Ascending aorta (tissue), 2 donors: ENCODE measurements at regions of chr12 and their contacts with region 1.

Region 1: GRCh38 chr12:120495723-120496412 is at the start of gene DYNLL1:
- DNase-seq: peak; percentile 85 to 97
- H3K4me3 ChIP-seq: peak within 1 kb of the TSS; percentile 83 to 86
- H3K27ac ChIP-seq: peak within 1 kb of the TSS; percentile 82 to 86
- H3K4me1 ChIP-seq: peaks cover 6 to 9% of the 10 kb centered on the region in 2 donors
- H3K27me3 ChIP-seq: no peaks in the 10 kb centered on the region
- CTCF ChIP-seq: peak in 1 of 3 experiments; percentile 4
- total RNA-seq, gene DYNLL1: 216 TPM

Region 2: GRCh38 chr12:120012067-120012621 is 483.7 kb before region 1 on chr12:
- intact Hi-C with region 1: no loop called
- DNase-seq: no peak
- H3K4me3 ChIP-seq: no peak overlapping the region
- H3K27ac ChIP-seq: no peak overlapping the region
- H3K4me1 ChIP-seq: no peaks in the 10 kb centered on the region
- H3K27me3 ChIP-seq: no peaks in the 10 kb centered on the region
- CTCF ChIP-seq: no peak

Region 3: DNA sequence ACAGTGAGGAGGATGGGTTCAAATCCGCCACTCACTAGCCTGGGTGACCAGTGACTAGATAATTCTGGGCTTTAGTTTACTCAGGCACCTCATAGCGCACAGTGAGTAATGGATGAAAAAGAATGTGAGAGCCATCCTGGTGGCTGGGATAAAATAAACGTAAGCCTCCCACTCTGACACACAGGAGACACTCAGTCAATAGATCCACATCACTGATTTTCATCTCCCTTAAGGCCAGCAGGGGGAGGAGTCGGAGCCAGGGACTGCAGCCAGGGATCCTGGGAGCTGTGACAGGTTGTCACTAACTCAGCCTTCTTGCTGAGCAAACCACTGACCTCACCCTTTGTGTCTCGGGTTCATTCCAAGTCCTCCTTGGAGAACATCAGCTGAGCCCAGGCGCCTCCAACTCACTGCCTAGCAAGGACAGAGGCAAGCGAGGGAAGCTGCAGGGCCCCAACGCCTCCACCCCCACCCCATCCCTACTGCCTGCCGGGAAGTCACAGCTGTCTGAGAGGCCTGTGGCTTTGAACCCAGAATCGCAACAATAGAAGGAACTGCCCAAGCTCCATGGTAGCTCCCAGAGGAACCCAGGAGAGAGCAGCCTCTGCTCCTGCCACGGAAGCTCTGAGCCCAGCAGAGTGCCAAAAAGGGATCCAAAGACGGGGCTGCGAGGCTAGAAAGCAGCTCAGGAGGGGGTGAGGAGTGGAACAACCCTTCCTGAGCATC is 261.1 kb before region 1 on chr12:
- intact Hi-C with region 1: no loop called
- DNase-seq: peak; percentile 86 to 95
- H3K4me3 ChIP-seq: peak overlapping the region in 1 of 2 donors; percentile 12
- H3K27ac ChIP-seq: peak overlapping the region; percentile 89 to 90
- H3K4me1 ChIP-seq: peaks cover 57 to 92% of the 10 kb centered on the region in 2 donors
- H3K27me3 ChIP-seq: no peaks in the 10 kb centered on the region
- CTCF ChIP-seq: peak in 2 of 3 experiments; percentile 38 to 52

Region 4: GRCh38 chr12:120445911-120446843 is 49.7 kb before region 1 on chr12 and contains the starts of genes GATC and TRIAP1:
- intact Hi-C with region 1: loop called (anchors 1 kb)
- DNase-seq: peak in 1 of 2 donors; percentile 89
- H3K4me3 ChIP-seq: peak within 1 kb of the TSS; percentile 81 to 98
- H3K27ac ChIP-seq: peak within 1 kb of the TSS; percentile 90 to 92
- H3K4me1 ChIP-seq: peaks cover 3 to 8% of the 10 kb centered on the region in 2 donors
- H3K27me3 ChIP-seq: no peaks in the 10 kb centered on the region
- CTCF ChIP-seq: no peak
- total RNA-seq, gene GATC: 6.2 TPM
- total RNA-seq, gene TRIAP1: 12.1 TPM

Region 5: GRCh38 chr12:120469450-120470149 is 26.3 kb before region 1 on chr12 and contains the start of gene SRSF9:
- intact Hi-C with region 1: loop called (anchors 1 kb)
- DNase-seq: peak; percentile 85 to 98
- H3K4me3 ChIP-seq: peak within 1 kb of the TSS; percentile 97 to 99
- H3K27ac ChIP-seq: peak within 1 kb of the TSS; percentile 94
- H3K4me1 ChIP-seq: peaks cover 8 to 32% of the 10 kb centered on the region in 2 donors
- H3K27me3 ChIP-seq: no peaks in the 10 kb centered on the region
- CTCF ChIP-seq: peak; percentile 92 to 96 (median 93)
- total RNA-seq, gene SRSF9: 68.6 TPM

Region 6: DNA sequence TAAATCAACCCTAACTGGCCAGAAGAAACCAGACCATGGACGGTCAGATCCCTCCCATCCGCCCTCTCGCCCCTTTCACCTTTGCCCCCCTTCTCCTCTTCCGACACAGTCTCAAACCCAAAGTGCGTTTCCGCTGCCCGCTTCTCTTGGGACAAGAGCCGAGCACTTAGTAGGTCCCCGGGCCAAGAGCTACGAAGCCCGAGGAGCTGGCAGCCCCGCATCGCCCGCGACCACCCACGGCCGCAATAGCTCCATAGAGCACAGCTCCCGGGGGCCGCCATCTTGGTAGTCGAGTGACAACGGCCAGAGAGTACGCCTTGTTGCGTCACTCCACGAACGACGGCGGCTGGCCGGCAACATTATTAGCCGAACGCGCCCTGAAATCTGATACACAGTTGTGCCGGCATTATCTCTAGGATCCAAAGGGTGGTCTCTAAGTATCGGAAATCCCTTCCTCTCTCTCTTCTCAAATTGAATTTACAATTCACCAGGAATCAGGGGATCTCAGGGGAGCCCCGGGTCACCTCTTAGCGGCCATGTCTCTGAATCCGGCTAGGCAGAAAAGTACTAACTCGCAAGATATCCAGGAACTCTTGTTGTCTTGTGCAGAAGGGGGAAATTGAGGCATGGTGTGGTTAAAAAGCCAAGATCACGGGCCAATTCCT is 33.1 kb after region 1 on chr12 and contains the start of gene COQ5:
- intact Hi-C with region 1: loop called (anchors 1 kb)
- DNase-seq: peak; percentile 48 to 94
- H3K4me3 ChIP-seq: peak within 1 kb of the TSS; percentile 78 to 93
- H3K27ac ChIP-seq: peak within 1 kb of the TSS; percentile 87 to 93
- H3K4me1 ChIP-seq: peaks cover 0 to 8% of the 10 kb centered on the region in 2 donors
- H3K27me3 ChIP-seq: no peaks in the 10 kb centered on the region
- CTCF ChIP-seq: no peak
- total RNA-seq, gene COQ5: 5.9 TPM

Region 7: DNA sequence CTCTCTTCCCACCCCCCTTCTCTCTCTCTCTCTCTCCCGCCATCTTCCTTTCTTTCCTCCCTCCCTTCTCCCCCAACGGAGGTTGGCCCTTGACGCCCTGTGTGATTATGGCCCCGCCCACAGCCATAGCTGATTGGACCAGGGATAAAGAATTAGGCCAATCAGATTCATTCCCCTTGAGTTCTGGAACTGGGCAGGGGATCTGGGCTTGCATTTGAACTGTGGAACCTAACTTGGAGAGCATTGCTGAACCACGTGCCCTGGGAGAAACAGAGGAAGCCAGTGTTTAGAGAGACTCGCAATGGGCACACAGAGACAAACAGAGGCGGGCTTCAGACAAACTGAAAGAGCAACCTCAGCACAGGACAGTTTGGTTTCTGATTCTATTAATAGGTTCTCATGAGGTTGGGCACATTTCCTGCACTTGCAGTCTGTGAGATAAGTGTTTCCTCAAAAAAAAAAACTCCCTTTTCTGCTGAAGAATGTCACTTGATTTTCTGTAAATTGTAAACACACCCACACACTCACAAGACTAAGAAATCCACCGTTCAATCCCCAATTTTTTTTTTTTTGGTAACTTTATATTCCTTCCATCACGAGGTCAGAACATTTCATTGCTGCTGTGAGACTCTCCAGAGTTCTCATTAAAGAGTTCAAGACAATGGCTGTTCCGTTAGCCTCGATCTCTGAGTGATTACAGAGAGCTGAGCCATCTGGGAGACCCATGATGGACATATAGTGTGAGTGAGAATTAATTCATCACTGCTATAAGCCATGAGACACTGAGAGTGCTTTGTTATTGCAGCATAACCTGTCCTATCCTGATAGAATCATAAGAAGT is 633.3 kb after region 1 on chr12:
- intact Hi-C with region 1: no loop called
- DNase-seq: peak; percentile 50 to 89
- H3K4me3 ChIP-seq: peak overlapping the region in 1 of 2 donors; percentile 33
- H3K27ac ChIP-seq: peak overlapping the region; percentile 18 to 51
- H3K4me1 ChIP-seq: no peaks in the 10 kb centered on the region
- H3K27me3 ChIP-seq: no peaks in the 10 kb centered on the region
- CTCF ChIP-seq: no peak